ENCODE measurements at regions of chr5 and their contacts with region 1.

Region 1: DNA sequence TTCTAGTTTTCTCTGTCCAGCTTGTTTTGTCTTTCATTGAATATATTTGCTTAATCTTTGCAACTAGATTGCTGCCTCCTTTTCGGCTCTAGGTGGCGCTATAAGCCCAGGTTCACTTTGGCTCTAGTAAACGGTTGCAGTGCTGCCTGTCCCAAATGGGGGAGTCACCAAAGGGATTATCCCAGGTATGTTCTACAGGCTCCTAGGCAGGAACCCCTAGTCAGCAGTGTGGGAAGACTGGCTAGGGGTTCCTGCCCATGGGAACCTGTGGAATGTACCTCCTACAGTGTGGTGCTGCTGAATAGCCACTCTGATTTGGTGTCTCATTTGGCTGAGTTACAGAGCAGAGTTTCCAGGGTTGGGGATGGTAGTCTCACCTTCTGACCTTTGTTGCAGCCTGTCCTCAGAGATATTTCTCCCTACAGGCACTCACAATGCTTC is 85.2 kb downstream of the ARSB start:
- DNase-seq: peak; percentile 37 to 57
- H3K4me3 ChIP-seq: no peak overlapping the region
- H3K27ac ChIP-seq: no peak overlapping the region
- H3K4me1 ChIP-seq: no peaks in the 10 kb centered on the region
- H3K27me3 ChIP-seq: no peaks in the 10 kb centered on the region
- CTCF ChIP-seq: peak in 5 of 6 experiments; percentile 19 to 70 (median 58)
- POLR2A ChIP-seq: no peak

Region 2: GRCh38 chr5:78537821-78538220 is 362.1 kb before region 1 on chr5:
- intact Hi-C with region 1: no loop called
- DNase-seq: no peak
- H3K4me3 ChIP-seq: no peak overlapping the region
- H3K27ac ChIP-seq: no peak overlapping the region
- H3K4me1 ChIP-seq: peaks cover 0 to 5% of the 10 kb centered on the region in 2 donors
- H3K27me3 ChIP-seq: no peaks in the 10 kb centered on the region
- CTCF ChIP-seq: peak in 4 of 6 experiments; percentile 30 to 51 (median 44)
- POLR2A ChIP-seq: no peak

Region 3: DNA sequence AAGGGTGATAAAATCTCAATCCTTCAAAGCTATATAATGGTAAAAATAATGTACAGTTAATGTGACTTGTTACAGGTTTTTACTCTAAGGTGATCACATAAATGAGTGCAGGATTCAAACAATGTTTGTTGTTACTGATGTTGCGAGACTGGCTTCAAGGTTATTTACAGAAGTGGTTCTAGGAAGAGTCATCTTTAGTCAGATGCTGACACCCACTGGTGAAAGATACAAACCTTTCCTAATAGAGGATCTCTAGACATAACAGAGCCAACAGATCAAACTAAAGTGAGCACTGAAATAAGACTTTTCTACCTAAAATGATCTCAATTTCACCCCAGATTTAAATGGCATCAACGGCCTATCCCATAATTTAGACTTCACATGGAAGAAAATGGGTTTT is 64.9 kb after region 1 on chr5:
- intact Hi-C with region 1: loop called (anchors 5 kb)
- DNase-seq: no peak
- H3K4me3 ChIP-seq: no peak overlapping the region
- H3K27ac ChIP-seq: no peak overlapping the region
- H3K4me1 ChIP-seq: no peaks in the 10 kb centered on the region
- H3K27me3 ChIP-seq: no peaks in the 10 kb centered on the region
- CTCF ChIP-seq: peak in 5 of 6 experiments; percentile 7 to 66 (median 51)
- POLR2A ChIP-seq: no peak

Measured in thyroid gland (tissue), 4 donors.